ENCODE measurements at regions of chr2 and their contacts with region 1.

Region 1: DNA sequence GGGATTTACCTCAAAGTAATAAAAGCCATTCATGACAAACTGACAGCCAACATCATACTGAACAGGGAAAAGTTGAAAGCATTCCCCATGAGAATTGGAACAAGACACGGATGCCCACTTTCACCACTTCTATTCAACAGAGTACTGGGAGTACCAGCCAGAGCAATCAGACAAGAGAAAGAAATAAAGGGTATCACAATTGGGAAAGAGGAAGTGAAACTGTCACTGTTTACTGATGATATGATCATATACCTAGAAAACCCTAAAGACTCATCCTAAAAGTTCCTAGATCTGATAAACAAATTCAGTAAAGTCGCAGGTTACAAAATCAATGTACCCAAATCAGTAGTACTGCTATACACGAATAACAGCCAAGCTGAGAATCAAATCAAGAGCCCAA is 17.2 kb upstream of the ASB18 start:
- DNase-seq: no peak
- ATAC-seq: no peak
- H3K4me3 ChIP-seq: no peak overlapping the region
- H3K27ac ChIP-seq: no peak overlapping the region
- H3K4me1 ChIP-seq: no peaks in the 10 kb centered on the region
- H3K27me3 ChIP-seq: no peaks in the 10 kb centered on the region
- CTCF ChIP-seq: no peak
- EP300 ChIP-seq: no peak
- POLR2A ChIP-seq: no peak
- RAD21 ChIP-seq: no peak

Region 2: DNA sequence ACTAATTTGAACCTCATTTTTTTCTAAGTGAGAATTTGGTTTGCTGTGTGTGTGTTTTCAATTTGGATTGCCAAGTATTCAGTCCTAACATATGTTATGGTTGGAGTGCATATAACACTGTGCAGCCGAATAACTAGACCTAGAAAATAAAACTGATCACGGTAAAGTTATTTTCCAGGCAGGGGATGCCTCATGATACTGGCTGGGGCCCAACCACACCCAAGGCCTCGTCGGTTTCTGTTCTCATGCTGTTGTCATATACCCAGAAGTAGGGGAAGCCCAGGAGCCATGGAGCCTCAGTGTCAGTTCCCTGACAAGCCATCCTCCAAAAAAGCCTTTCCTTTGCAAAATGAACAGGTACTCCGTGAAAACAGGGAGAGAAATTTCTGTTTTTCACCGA is 273.4 kb before region 1 on chr2:
- CTCF ChIA-PET with region 1: no interaction called
- POLR2A ChIA-PET with region 1: no interaction called
- in situ Hi-C with region 1: no loop called
- intact Hi-C with region 1: no loop called
- DNase-seq: no peak
- ATAC-seq: no peak
- H3K4me3 ChIP-seq: no peak overlapping the region
- H3K27ac ChIP-seq: no peak overlapping the region
- H3K4me1 ChIP-seq: peaks cover 35% of the 10 kb centered on the region
- H3K27me3 ChIP-seq: no peaks in the 10 kb centered on the region
- CTCF ChIP-seq: no peak
- EP300 ChIP-seq: no peak
- POLR2A ChIP-seq: no peak
- RAD21 ChIP-seq: no peak

Region 3: GRCh38 chr2:236259371-236259770 is 22.1 kb before region 1 on chr2:
- CTCF ChIA-PET with region 1: no interaction called
- POLR2A ChIA-PET with region 1: no interaction called
- in situ Hi-C with region 1: no loop called
- intact Hi-C with region 1: loop called (anchors 1 kb)
- DNase-seq: no peak
- ATAC-seq: no peak
- H3K4me3 ChIP-seq: no peak overlapping the region
- H3K27ac ChIP-seq: no peak overlapping the region
- H3K4me1 ChIP-seq: no peaks in the 10 kb centered on the region
- H3K27me3 ChIP-seq: peaks cover 10 to 76% of the 10 kb centered on the region in 2 experiments; a peak in 4 of 5 replicates
- CTCF ChIP-seq: no peak
- EP300 ChIP-seq: no peak
- POLR2A ChIP-seq: no peak
- RAD21 ChIP-seq: no peak

Region 4: DNA sequence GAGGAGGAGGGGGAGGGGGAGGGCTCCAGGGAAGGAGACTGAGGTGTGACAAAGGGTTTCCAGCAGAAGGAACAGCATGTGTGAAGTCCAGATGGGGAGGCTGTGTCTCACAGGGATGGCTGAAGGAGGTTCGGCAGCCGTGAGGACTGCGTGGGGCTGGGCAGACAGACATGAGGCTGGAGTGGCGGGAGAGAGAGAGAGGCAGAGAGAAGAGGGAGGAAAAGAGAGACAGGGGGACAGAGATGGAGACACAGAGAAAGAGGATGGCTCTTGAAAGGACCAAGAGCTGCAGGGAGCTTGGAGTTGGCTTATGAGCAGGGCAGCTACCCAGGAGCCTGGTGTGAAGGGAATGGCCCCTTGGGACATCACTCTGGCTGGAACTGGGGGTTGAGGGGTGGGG is 121.7 kb after region 1 on chr2:
- CTCF ChIA-PET with region 1: no interaction called
- POLR2A ChIA-PET with region 1: no interaction called
- in situ Hi-C with region 1: no loop called
- intact Hi-C with region 1: no loop called
- DNase-seq: no peak
- ATAC-seq: no peak
- H3K4me3 ChIP-seq: no peak overlapping the region
- H3K27ac ChIP-seq: no peak overlapping the region
- H3K4me1 ChIP-seq: peaks cover 7% of the 10 kb centered on the region; the same call in 1 of the 2 replicates
- H3K27me3 ChIP-seq: peaks cover 8 to 61% of the 10 kb centered on the region in 2 experiments
- CTCF ChIP-seq: no peak
- EP300 ChIP-seq: no peak
- POLR2A ChIP-seq: no peak
- RAD21 ChIP-seq: no peak

Region 5: GRCh38 chr2:236517251-236518031 is 236.0 kb after region 1 on chr2:
- CTCF ChIA-PET with region 1: no interaction called
- POLR2A ChIA-PET with region 1: no interaction called
- in situ Hi-C with region 1: no loop called
- intact Hi-C with region 1: no loop called
- DNase-seq: no peak
- ATAC-seq: no peak
- H3K4me3 ChIP-seq: no peak overlapping the region
- H3K27ac ChIP-seq: no peak overlapping the region
- H3K4me1 ChIP-seq: no peaks in the 10 kb centered on the region
- H3K27me3 ChIP-seq: peaks cover 1 to 15% of the 10 kb centered on the region in 2 experiments; a peak in 3 of 5 replicates
- CTCF ChIP-seq: no peak
- EP300 ChIP-seq: no peak
- POLR2A ChIP-seq: no peak
- RAD21 ChIP-seq: no peak

Region 6: GRCh38 chr2:237045432-237045831 is 764.0 kb after region 1 on chr2:
- CTCF ChIA-PET with region 1: no interaction called
- POLR2A ChIA-PET with region 1: no interaction called
- in situ Hi-C with region 1: no loop called
- intact Hi-C with region 1: no loop called
- DNase-seq: no peak
- ATAC-seq: no peak
- H3K4me3 ChIP-seq: no peak overlapping the region
- H3K27ac ChIP-seq: no peak overlapping the region
- H3K4me1 ChIP-seq: no peaks in the 10 kb centered on the region
- H3K27me3 ChIP-seq: no peaks in the 10 kb centered on the region
- CTCF ChIP-seq: no peak
- EP300 ChIP-seq: no peak
- POLR2A ChIP-seq: no peak
- RAD21 ChIP-seq: no peak